ENCODE measurements at regions of chr2 and their contacts with region 1.

Region 1: GRCh38 chr2:171325886-171326585 is 107.8 kb downstream of the METTL8 start:
- DNase-seq: peak; percentile 75
- ATAC-seq: peak; percentile 52
- H3K4me3 ChIP-seq: peak overlapping the region; percentile 24 to 54 (median 50)
- H3K4me3 Mint-ChIP-seq: peak overlapping the region; percentile 89
- H3K27ac ChIP-seq: peak overlapping the region; percentile 89 to 91
- H3K27ac Mint-ChIP-seq: peak overlapping the region; percentile 91
- H3K4me1 ChIP-seq: peaks cover 67 to 70% of the 10 kb centered on the region in 2 donors
- H3K4me1 Mint-ChIP-seq: peaks cover 76% of the 10 kb centered on the region
- H3K27me3 ChIP-seq: no peaks in the 10 kb centered on the region
- H3K27me3 Mint-ChIP-seq: no peaks in the 10 kb centered on the region
- CTCF ChIP-seq: no peak

Region 2: GRCh38 chr2:171307560-171307959 is 18.5 kb before region 1 on chr2:
- CTCF ChIA-PET with region 1: interaction called, 4 read pairs
- POLR2A ChIA-PET with region 1: interaction called, 13 read pairs
- intact Hi-C with region 1: no loop called
- DNase-seq: no peak
- ATAC-seq: peak; percentile 63
- H3K4me3 ChIP-seq: no peak overlapping the region
- H3K4me3 Mint-ChIP-seq: peak overlapping the region; percentile 30
- H3K27ac ChIP-seq: peak overlapping the region in 1 of 2 donors; percentile 9
- H3K27ac Mint-ChIP-seq: peak overlapping the region; percentile 73
- H3K4me1 ChIP-seq: peaks cover 6 to 8% of the 10 kb centered on the region in 2 donors
- H3K4me1 Mint-ChIP-seq: peaks cover 11% of the 10 kb centered on the region
- H3K27me3 ChIP-seq: no peaks in the 10 kb centered on the region
- H3K27me3 Mint-ChIP-seq: no peaks in the 10 kb centered on the region
- CTCF ChIP-seq: no peak

Region 3: GRCh38 chr2:171342067-171342413 is 16.0 kb after region 1 on chr2:
- CTCF ChIA-PET with region 1: interaction called, 11 read pairs
- POLR2A ChIA-PET with region 1: interaction called, 25 read pairs
- intact Hi-C with region 1: no loop called
- DNase-seq: no peak
- ATAC-seq: no peak
- H3K4me3 ChIP-seq: no peak overlapping the region
- H3K4me3 Mint-ChIP-seq: no peak overlapping the region
- H3K27ac ChIP-seq: peak overlapping the region in 1 of 2 donors; percentile 60
- H3K27ac Mint-ChIP-seq: peak overlapping the region; percentile 32
- H3K4me1 ChIP-seq: peaks cover 7 to 20% of the 10 kb centered on the region in 2 donors
- H3K4me1 Mint-ChIP-seq: peaks cover 31% of the 10 kb centered on the region
- H3K27me3 ChIP-seq: no peaks in the 10 kb centered on the region
- H3K27me3 Mint-ChIP-seq: no peaks in the 10 kb centered on the region
- CTCF ChIP-seq: no peak

Region 4: GRCh38 chr2:171407030-171407675 is 81.1 kb after region 1 on chr2:
- CTCF ChIA-PET with region 1: interaction called, 8 read pairs
- POLR2A ChIA-PET with region 1: interaction called, 3 read pairs
- intact Hi-C with region 1: loop called (anchors 5 kb)
- DNase-seq: peak; percentile 54
- ATAC-seq: no peak
- H3K4me3 ChIP-seq: peak overlapping the region in 1 of 5 experiments; percentile 1
- H3K4me3 Mint-ChIP-seq: peak overlapping the region; percentile 38
- H3K27ac ChIP-seq: peak overlapping the region; percentile 78 to 93
- H3K27ac Mint-ChIP-seq: peak overlapping the region; percentile 73
- H3K4me1 ChIP-seq: peaks cover 34 to 39% of the 10 kb centered on the region in 2 donors
- H3K4me1 Mint-ChIP-seq: peaks cover 48% of the 10 kb centered on the region
- H3K27me3 ChIP-seq: no peaks in the 10 kb centered on the region
- H3K27me3 Mint-ChIP-seq: no peaks in the 10 kb centered on the region
- CTCF ChIP-seq: no peak